CD8-positive, alpha-beta T cell (primary cell): ENCODE measurements at regions of chr1 and their contacts with region 1.

Region 1: DNA sequence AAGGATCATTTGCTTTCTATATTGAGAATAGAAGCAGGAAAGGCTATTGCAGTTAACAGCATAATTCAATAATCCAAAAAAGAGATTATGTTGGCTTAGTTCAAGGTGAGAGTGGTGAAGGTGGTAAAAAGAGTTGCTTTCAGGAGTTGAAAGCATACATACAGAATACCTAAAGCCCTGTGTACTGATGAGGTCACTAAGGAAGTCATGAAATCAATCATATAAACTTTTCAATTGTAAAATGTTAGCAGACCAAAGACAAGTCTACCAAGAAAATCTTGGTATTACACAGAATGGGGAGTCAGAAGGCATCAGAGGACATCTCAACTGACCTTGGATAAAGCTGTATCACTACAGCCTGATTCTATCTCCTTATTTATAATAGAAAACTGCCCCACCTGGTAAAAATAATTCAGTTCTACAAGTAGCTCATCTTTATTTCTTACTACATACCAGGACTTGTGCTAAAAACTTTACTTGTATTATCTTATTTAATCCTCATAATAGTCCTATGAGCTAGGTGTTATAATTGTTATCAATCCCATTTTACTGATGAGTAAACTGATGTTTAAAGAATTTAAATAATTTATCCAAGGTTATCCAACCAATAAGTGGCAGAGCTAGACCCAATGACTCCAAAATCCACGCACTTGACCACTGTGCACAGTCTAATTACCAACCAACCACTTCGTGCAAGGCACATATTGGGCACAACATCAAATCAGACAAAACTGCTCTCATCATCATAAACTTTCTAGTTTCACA is 40.9 kb downstream of the TUT4 start:
- DNase-seq: no peak
- ATAC-seq: no peak
- H3K4me3 ChIP-seq: no peak overlapping the region
- H3K4me3 Mint-ChIP-seq: no peak overlapping the region
- H3K27ac ChIP-seq: no peak overlapping the region
- H3K27ac Mint-ChIP-seq: no peak overlapping the region
- H3K4me1 ChIP-seq: no peaks in the 10 kb centered on the region
- H3K4me1 Mint-ChIP-seq: peaks cover 9% of the 10 kb centered on the region
- H3K27me3 ChIP-seq: no peaks in the 10 kb centered on the region
- H3K27me3 Mint-ChIP-seq: no peaks in the 10 kb centered on the region
- CTCF ChIP-seq: no peak

Region 2: DNA sequence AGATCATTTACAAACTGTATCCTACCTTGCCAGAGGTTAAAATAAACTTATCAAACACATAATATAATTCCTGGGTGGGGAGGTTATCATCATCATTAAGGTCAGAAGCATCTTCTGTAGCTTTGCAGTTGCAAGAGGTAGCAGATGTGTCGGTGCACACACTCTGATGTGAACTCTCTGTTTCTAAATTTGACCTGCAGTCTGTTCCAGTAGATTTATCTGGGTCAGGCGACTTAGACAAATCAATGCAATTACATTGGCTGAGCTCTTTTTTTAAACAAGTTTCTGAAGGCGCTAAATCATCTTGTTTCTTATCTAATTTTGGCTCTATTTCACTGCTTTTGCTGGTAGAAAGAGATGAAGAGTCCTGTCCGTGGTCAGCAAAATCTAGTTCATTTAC is 37.2 kb before region 1 on chr1:
- CTCF ChIA-PET with region 1: no interaction called
- POLR2A ChIA-PET with region 1: no interaction called
- intact Hi-C with region 1: loop called in 1 of 2 experiments (anchors 5 kb)
- DNase-seq: no peak
- ATAC-seq: no peak
- H3K4me3 ChIP-seq: no peak overlapping the region
- H3K4me3 Mint-ChIP-seq: no peak overlapping the region
- H3K27ac ChIP-seq: no peak overlapping the region
- H3K27ac Mint-ChIP-seq: no peak overlapping the region
- H3K4me1 ChIP-seq: no peaks in the 10 kb centered on the region
- H3K4me1 Mint-ChIP-seq: peaks cover 4% of the 10 kb centered on the region
- H3K27me3 ChIP-seq: no peaks in the 10 kb centered on the region
- H3K27me3 Mint-ChIP-seq: no peaks in the 10 kb centered on the region
- CTCF ChIP-seq: no peak

Region 3: DNA sequence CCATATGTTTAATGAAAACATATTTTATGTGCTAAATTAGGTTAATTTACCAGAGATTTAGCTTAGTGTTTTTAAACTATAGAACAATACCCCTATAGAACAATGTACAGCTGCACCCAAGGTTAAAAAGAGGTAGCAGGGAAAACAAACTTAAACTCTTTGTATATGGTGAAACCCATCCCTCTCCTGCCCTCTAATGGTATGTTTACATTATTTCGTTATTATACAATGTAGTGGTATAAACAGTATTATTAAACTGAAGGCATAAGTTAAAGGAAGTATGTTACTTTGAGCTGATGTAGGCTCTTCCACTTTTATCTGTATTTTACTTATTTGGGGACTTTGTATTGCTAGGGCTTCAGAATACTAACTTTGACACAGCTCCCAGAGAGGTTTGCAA is 313.8 kb after region 1 on chr1:
- CTCF ChIA-PET with region 1: no interaction called
- POLR2A ChIA-PET with region 1: no interaction called
- intact Hi-C with region 1: no loop called
- DNase-seq: peak in 1 of 9 experiments; percentile 17
- ATAC-seq: no peak
- H3K4me3 ChIP-seq: no peak overlapping the region
- H3K4me3 Mint-ChIP-seq: no peak overlapping the region
- H3K27ac ChIP-seq: no peak overlapping the region
- H3K27ac Mint-ChIP-seq: no peak overlapping the region
- H3K4me1 ChIP-seq: no peaks in the 10 kb centered on the region
- H3K4me1 Mint-ChIP-seq: no peaks in the 10 kb centered on the region
- H3K27me3 ChIP-seq: no peaks in the 10 kb centered on the region
- H3K27me3 Mint-ChIP-seq: no peaks in the 10 kb centered on the region
- CTCF ChIP-seq: no peak